ENCODE measurements at regions of chr17 and their contacts with region 1.

Region 1: GRCh38 chr17:77746896-77747554 is 211.5 kb upstream of the TNRC6C start:
- DNase-seq: no peak
- ATAC-seq: no peak
- H3K4me3 ChIP-seq: no peak overlapping the region
- H3K27ac ChIP-seq: no peak overlapping the region
- H3K4me1 ChIP-seq: no peaks in the 10 kb centered on the region
- H3K27me3 ChIP-seq: 0 out of 2 replicates have a peak, but pooled peaks cover 4% of the 10 kb centered on the region
- CTCF ChIP-seq: no peak

Region 2: GRCh38 chr17:77601054-77601964 is 145.7 kb before region 1 on chr17:
- CTCF ChIA-PET with region 1: interaction called, 13 read pairs
- POLR2A ChIA-PET with region 1: no interaction called
- in situ Hi-C with region 1: no loop called
- intact Hi-C with region 1: no loop called
- DNase-seq: no peak
- ATAC-seq: 0 out of 2 replicates have a peak, but pooled peaks have one; percentile 20
- H3K4me3 ChIP-seq: no peak overlapping the region
- H3K27ac ChIP-seq: no peak overlapping the region
- H3K4me1 ChIP-seq: no peaks in the 10 kb centered on the region
- H3K27me3 ChIP-seq: no peaks in the 10 kb centered on the region
- CTCF ChIP-seq: no peak

Region 3: DNA sequence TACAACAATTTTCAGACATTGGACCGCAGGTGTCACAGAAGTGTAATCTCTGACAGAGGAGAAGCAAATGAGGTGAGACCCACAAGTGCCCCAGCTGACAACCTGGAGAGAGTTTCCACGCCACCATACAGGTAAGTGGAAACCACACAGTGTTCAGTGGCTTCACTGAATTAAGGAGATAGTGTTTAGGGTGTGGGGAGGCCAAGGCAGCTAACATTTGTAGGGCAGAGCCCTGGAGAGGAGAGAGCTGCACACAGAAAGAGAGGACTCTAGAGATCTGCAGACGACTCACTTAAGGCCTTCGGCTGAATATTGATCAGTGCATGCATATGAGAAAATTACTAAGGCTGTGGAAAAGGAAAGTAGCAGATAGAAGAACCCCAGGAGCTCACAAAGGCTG is 17.4 kb before region 1 on chr17:
- CTCF ChIA-PET with region 1: no interaction called
- POLR2A ChIA-PET with region 1: interaction called, 11 read pairs
- in situ Hi-C with region 1: no loop called
- intact Hi-C with region 1: no loop called
- DNase-seq: no peak
- ATAC-seq: no peak
- H3K4me3 ChIP-seq: no peak overlapping the region
- H3K27ac ChIP-seq: no peak overlapping the region
- H3K4me1 ChIP-seq: peaks cover 2% of the 10 kb centered on the region; the same call in 1 of the 2 replicates
- H3K27me3 ChIP-seq: peaks cover 16% of the 10 kb centered on the region
- CTCF ChIP-seq: no peak

Region 4: GRCh38 chr17:77845541-77846225 is 98.7 kb after region 1 on chr17:
- CTCF ChIA-PET with region 1: no interaction called
- POLR2A ChIA-PET with region 1: interaction called, 12 read pairs
- in situ Hi-C with region 1: no loop called
- intact Hi-C with region 1: no loop called
- DNase-seq: no peak
- ATAC-seq: no peak
- H3K4me3 ChIP-seq: no peak overlapping the region
- H3K27ac ChIP-seq: no peak overlapping the region
- H3K4me1 ChIP-seq: no peaks in the 10 kb centered on the region
- H3K27me3 ChIP-seq: no peaks in the 10 kb centered on the region; the same call in 1 of the 2 replicates
- CTCF ChIP-seq: no peak

Region 5: DNA sequence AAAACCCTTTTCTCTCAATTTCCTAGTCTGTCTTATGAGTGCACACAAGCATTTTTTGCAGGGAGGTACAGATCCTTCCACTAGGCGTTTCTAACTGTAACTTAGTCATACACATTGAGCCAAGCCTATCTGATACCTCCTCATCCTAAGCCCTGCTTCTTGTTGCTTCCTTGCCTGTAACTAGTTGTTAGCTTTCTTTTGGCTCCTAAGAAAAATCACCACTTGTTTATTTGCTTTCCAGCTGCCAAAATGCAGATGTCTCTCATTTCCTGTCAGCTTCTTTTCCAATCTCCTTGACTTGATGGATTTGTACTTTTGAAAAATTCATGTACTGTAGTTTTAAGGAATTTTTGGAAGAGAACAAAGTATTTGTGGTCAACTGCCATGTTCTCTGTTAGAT is 285.1 kb after region 1 on chr17:
- CTCF ChIA-PET with region 1: no interaction called
- POLR2A ChIA-PET with region 1: no interaction called
- in situ Hi-C with region 1: no loop called
- intact Hi-C with region 1: no loop called
- DNase-seq: no peak
- ATAC-seq: 0 out of 2 replicates have a peak, but pooled peaks have one; percentile 64
- H3K4me3 ChIP-seq: no peak overlapping the region
- H3K27ac ChIP-seq: no peak overlapping the region
- H3K4me1 ChIP-seq: no peaks in the 10 kb centered on the region
- H3K27me3 ChIP-seq: no peaks in the 10 kb centered on the region
- CTCF ChIP-seq: no peak